ENCODE measurements at regions of chr1 and their contacts with region 1.

Region 1: GRCh38 chr1:32892368-32893197 is 6.3 kb downstream of the HPCA start:
- DNase-seq: peak; percentile 46
- H3K4me3 Mint-ChIP-seq: peak overlapping the region; percentile 23
- H3K27ac Mint-ChIP-seq: no peak overlapping the region
- H3K4me1 Mint-ChIP-seq: peaks cover 10% of the 10 kb centered on the region
- H3K27me3 Mint-ChIP-seq: peaks cover 95% of the 10 kb centered on the region

Region 2: GRCh38 chr1:32881871-32882850 is 10.4 kb before region 1 on chr1:
- CTCF ChIA-PET with region 1: interaction called, 27 read pairs
- DNase-seq: no peak
- H3K4me3 Mint-ChIP-seq: no peak overlapping the region
- H3K27ac Mint-ChIP-seq: no peak overlapping the region
- H3K4me1 Mint-ChIP-seq: peaks cover 4% of the 10 kb centered on the region
- H3K27me3 Mint-ChIP-seq: peaks cover 79% of the 10 kb centered on the region

Measured in activated naive CD4-positive, alpha-beta T cell treated with anti-CD3 and anti-CD28 coated beads, Interleukin-2, amount 10 ng/mL, durations not matched to agents 7 days and 5 days (primary cell).